HCT116 (cell line): ENCODE measurements at regions of chr3 and their contacts with region 1.

Region 1: GRCh38 chr3:166837535-166837934 is 542.6 kb downstream of the ZBBX start:
- DNase-seq: peak; percentile 37
- ATAC-seq: peak; percentile 94
- H3K4me3 ChIP-seq: no peak overlapping the region
- H3K27ac ChIP-seq: no peak overlapping the region
- H3K4me1 ChIP-seq: no peaks in the 10 kb centered on the region
- H3K27me3 ChIP-seq: no peaks in the 10 kb centered on the region
- CTCF ChIP-seq: peak in 2 of 3 experiments; percentile 58 to 75; a peak in 4 of 6 replicates
- POLR2A ChIP-seq: no peak
- RAD21 ChIP-seq: peak; percentile 40

Region 2: DNA sequence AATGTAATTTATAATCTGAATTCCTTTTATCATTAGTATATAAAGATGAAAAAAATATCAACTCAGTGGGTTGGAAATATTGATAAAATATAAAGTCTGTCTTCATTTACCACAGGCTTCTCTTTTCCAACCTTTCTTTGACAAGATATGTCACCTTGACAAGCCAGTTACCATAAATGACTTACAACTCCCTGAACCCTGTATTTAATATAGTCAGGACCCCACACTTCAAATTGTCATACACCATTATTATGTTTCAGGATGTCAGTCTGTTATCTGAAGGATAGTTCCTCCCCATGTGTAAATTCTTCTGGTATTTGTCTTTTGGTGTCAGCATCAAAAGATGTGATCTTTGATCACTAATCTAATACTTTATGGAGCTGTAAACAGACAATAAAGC is 496.9 kb before region 1 on chr3:
- CTCF ChIA-PET with region 1: no interaction called
- POLR2A ChIA-PET with region 1: no interaction called
- RAD21 ChIA-PET with region 1: no interaction called
- intact Hi-C with region 1: no loop called
- DNase-seq: no peak
- ATAC-seq: no peak
- H3K4me3 ChIP-seq: no peak overlapping the region
- H3K27ac ChIP-seq: no peak overlapping the region
- H3K4me1 ChIP-seq: no peaks in the 10 kb centered on the region
- H3K27me3 ChIP-seq: no peaks in the 10 kb centered on the region
- CTCF ChIP-seq: no peak
- POLR2A ChIP-seq: no peak
- RAD21 ChIP-seq: no peak

Region 3: GRCh38 chr3:166818472-166818871 is 19.1 kb before region 1 on chr3:
- CTCF ChIA-PET with region 1: interaction called, 10 read pairs
- POLR2A ChIA-PET with region 1: no interaction called
- RAD21 ChIA-PET with region 1: no interaction called
- intact Hi-C with region 1: no loop called
- DNase-seq: no peak
- ATAC-seq: no peak
- H3K4me3 ChIP-seq: no peak overlapping the region
- H3K27ac ChIP-seq: no peak overlapping the region
- H3K4me1 ChIP-seq: no peaks in the 10 kb centered on the region
- H3K27me3 ChIP-seq: no peaks in the 10 kb centered on the region
- CTCF ChIP-seq: no peak
- POLR2A ChIP-seq: no peak
- RAD21 ChIP-seq: no peak